Psoas muscle (tissue), 8 donors: ENCODE measurements at regions of chr3 and their contacts with region 1.

Region 1: DNA sequence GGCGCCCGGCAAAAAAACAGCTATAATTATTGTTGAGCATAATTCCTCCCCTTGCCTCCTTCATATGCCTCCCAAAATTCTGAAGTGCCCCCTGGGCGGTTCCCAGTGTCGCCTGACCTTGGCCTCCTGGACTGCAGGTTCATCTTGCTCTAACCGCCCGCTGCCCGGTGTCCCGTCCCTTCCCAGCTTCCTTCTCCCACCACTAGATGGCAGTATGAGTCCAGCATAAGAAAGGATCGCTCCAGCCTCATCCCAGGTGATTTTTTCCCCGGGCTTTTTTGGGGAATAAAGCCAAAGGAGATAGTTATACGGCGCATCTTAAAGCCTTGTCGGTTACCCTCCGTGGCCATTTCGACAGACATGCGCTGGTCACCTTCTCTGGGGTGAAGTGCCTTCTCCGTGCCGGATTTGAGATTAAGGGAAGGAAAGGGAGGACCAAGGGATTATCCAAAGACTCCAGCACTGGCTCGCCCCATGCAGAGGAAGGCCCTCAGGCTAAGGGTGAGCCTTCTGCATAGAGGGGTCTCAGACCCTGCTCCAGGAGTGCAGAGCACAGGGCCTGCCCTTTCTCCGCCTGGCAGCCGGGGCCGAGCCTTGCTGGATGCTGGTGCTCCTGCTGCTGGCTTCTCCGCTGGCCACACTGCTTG is 45.8 kb upstream of the TRA2B start:
- DNase-seq: peak; percentile 39 to 60
- ATAC-seq: peak; percentile 95 to 99 (median 96)
- H3K4me3 ChIP-seq: no peak overlapping the region
- H3K27ac ChIP-seq: no peak overlapping the region
- H3K4me1 ChIP-seq: no peaks in the 10 kb centered on the region
- H3K27me3 ChIP-seq: no peaks in the 10 kb centered on the region
- CTCF ChIP-seq: peak; percentile 96

Region 2: DNA sequence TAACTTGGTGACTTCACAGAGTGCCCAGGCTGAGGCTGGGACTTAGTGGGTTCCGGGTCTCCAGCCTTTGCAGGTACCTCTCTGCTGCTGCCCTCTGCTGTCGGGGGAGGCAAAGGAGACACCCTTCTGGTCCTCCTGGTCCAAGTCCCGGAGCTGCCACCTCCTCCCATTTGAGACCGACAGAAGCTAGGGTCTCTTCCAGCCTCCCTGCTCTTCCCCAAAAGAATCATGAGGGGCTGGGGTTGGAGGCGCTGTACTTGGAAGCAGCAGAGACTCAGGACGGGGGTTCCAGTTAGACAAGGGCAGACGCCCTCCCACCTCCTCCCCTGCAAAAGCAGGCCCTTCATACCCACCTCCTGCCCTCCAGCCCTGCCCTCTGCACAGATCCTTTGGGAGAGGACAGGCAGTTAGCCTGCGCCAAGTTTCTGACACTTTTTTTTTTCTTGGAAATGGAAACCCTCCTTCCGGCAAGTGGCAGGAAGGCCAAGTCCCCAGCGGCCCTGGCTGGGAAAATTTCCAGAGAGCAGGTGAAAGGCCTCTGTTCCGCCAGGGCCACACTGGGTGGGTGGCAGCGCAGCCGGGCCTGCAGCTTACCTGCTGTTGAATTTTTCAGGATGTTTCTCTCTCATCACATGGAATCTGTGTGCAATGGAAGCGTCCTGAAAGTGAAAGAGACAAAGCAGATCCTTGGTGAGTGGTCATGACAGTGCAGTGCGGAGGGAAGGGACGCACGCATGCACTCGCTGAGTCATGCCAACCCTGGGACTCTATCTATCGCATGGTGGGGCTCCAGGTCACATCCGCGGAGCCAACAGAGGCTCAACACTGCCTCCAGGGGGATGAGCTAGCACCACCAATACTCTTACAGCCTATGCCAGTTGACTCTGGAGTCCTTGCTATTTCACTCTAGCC is 258.5 kb after region 1 on chr3:
- intact Hi-C with region 1: loop called (anchors 1 to 5 kb)
- DNase-seq: peak; percentile 72 to 90
- ATAC-seq: peak; percentile 94 to 96 (median 95)
- H3K4me3 ChIP-seq: peak overlapping the region; percentile 65
- H3K27ac ChIP-seq: peak overlapping the region; percentile 90
- H3K4me1 ChIP-seq: peaks cover 46% of the 10 kb centered on the region
- H3K27me3 ChIP-seq: no peaks in the 10 kb centered on the region
- CTCF ChIP-seq: peak; percentile 58

Region 3: GRCh38 chr3:186259612-186260383 is 276.2 kb after region 1 on chr3:
- intact Hi-C with region 1: loop called (anchors 5 kb)
- DNase-seq: peak; percentile 55 to 79
- ATAC-seq: peak; percentile 95 to 100 (median 96)
- H3K4me3 ChIP-seq: no peak overlapping the region
- H3K27ac ChIP-seq: no peak overlapping the region
- H3K4me1 ChIP-seq: no peaks in the 10 kb centered on the region
- H3K27me3 ChIP-seq: peaks cover 0 to 1% (median 0%) of the 10 kb centered on the region in 3 donors
- CTCF ChIP-seq: peak; percentile 77

Region 4: GRCh38 chr3:186277268-186277909 is 293.8 kb after region 1 on chr3:
- intact Hi-C with region 1: loop called (anchors 1 to 5 kb)
- DNase-seq: no peak
- ATAC-seq: peak; percentile 83 to 95 (median 84)
- H3K4me3 ChIP-seq: no peak overlapping the region
- H3K27ac ChIP-seq: no peak overlapping the region
- H3K4me1 ChIP-seq: no peaks in the 10 kb centered on the region
- H3K27me3 ChIP-seq: peaks cover 0 to 3% (median 0%) of the 10 kb centered on the region in 3 donors
- CTCF ChIP-seq: peak; percentile 70

Region 5: GRCh38 chr3:186540221-186540834 is 556.7 kb after region 1 on chr3:
- intact Hi-C with region 1: loop called (anchors 2 to 5 kb)
- DNase-seq: peak in 1 of 2 donors; percentile 24
- ATAC-seq: peak; percentile 68 to 97 (median 84)
- H3K4me3 ChIP-seq: peak overlapping the region; percentile 33
- H3K27ac ChIP-seq: no peak overlapping the region
- H3K4me1 ChIP-seq: no peaks in the 10 kb centered on the region
- H3K27me3 ChIP-seq: no peaks in the 10 kb centered on the region
- CTCF ChIP-seq: peak; percentile 71